CD8-positive, alpha-beta T cell (primary cell): ENCODE measurements at regions of chr13 and their contacts with region 1.

Region 1: DNA sequence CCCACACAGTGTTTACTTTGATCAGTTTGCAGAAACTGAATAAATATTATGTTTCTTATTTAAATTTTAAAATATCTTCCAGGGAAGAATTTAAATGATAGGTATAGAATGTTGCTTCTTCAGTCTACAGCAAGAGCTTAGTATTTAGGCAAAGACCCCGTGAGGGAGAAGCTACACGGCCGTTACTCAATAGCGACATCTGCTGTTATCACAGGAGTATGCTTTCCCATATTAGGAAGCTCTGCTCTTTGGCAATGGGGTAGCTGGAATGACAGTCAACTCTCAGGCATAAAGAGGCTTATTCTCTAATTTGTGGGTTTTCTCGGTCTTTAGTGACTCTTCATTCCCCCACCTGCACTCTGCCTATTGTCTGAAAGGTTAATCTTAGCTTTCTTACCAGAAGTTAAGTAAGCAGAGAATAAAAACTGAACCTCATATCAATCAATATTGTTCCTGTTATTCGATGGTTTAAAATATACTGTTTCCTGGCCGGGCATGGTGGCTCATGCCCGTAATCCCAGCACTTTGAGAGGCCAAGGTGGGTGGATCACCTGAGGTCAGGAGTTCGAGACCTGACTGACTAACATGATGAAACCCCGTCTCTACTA is 13.2 kb upstream of the LHFPL6 start:
- DNase-seq: peak in 7 of 9 experiments; percentile 7 to 73 (median 33)
- ATAC-seq: peak; percentile 86
- H3K4me3 ChIP-seq: no peak overlapping the region
- H3K4me3 Mint-ChIP-seq: no peak overlapping the region
- H3K27ac ChIP-seq: no peak overlapping the region
- H3K27ac Mint-ChIP-seq: no peak overlapping the region
- H3K4me1 ChIP-seq: no peaks in the 10 kb centered on the region
- H3K4me1 Mint-ChIP-seq: no peaks in the 10 kb centered on the region
- H3K27me3 ChIP-seq: no peaks in the 10 kb centered on the region
- H3K27me3 Mint-ChIP-seq: peaks cover 11% of the 10 kb centered on the region
- CTCF ChIP-seq: peak; percentile 83

Region 2: DNA sequence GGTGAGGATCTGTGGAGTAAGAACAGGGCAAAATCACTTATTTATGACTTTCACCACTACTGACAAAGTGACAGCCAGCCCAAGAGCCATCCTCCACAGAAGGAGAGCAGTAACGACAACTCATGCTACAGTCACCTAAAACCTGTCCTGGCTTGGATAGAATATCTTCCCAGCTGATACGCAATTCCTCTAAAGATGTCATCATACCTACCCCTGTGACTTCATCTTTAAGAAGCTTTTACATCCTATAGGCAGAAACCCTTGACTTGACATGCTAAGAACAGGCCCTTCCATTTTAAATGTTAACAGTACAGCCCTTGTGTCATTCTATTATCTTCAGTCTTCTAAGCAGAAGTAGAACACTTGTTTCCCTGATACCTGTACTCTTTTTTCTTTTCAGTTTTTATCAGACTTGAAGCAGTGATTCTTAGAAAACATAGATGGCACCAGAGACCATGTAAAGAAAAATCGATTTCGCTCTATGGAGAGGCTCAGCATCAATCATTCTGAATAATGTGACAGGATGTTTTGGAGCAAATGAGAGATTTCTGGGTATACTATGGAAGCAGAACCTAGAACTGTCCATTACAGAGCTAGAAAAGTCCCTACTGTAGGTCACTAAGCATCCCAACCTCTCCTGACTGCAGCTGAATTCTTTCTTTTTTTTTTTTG is 645.7 kb before region 1 on chr13:
- CTCF ChIA-PET with region 1: interaction called, 15 read pairs
- POLR2A ChIA-PET with region 1: no interaction called
- intact Hi-C with region 1: loop called in 1 of 2 experiments (anchors 5 kb)
- DNase-seq: peak in 2 of 9 experiments; percentile 3 to 13
- ATAC-seq: no peak
- H3K4me3 ChIP-seq: no peak overlapping the region
- H3K4me3 Mint-ChIP-seq: no peak overlapping the region
- H3K27ac ChIP-seq: no peak overlapping the region
- H3K27ac Mint-ChIP-seq: no peak overlapping the region
- H3K4me1 ChIP-seq: no peaks in the 10 kb centered on the region
- H3K4me1 Mint-ChIP-seq: no peaks in the 10 kb centered on the region
- H3K27me3 ChIP-seq: no peaks in the 10 kb centered on the region
- H3K27me3 Mint-ChIP-seq: peaks cover 4% of the 10 kb centered on the region
- CTCF ChIP-seq: no peak

Region 3: DNA sequence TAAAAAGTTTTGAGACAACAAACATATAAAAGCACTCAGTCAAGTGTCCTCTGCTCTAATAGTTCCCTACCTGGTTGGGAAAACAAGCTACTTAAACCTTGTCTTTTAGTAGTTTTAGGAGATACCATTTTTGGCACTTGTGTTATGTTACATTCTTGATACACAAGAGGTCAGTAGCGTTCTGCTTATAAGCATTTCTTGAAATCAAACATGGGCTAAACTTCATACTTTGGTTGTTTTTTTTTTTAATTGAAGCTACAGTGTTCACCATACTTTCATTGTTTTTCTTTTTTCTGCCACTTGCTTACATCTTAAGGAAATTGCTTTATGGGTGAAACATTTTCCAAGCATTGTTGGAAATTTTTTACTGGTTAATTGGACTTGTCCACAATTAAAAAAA is 565.0 kb before region 1 on chr13:
- CTCF ChIA-PET with region 1: interaction called, 5 read pairs
- POLR2A ChIA-PET with region 1: no interaction called
- intact Hi-C with region 1: loop called (anchors 1 to 2 kb)
- DNase-seq: peak in 2 of 9 experiments; percentile 37 to 52
- ATAC-seq: no peak
- H3K4me3 ChIP-seq: no peak overlapping the region
- H3K4me3 Mint-ChIP-seq: no peak overlapping the region
- H3K27ac ChIP-seq: no peak overlapping the region
- H3K27ac Mint-ChIP-seq: no peak overlapping the region
- H3K4me1 ChIP-seq: peaks cover 8% of the 10 kb centered on the region
- H3K4me1 Mint-ChIP-seq: peaks cover 15% of the 10 kb centered on the region
- H3K27me3 ChIP-seq: no peaks in the 10 kb centered on the region
- H3K27me3 Mint-ChIP-seq: no peaks in the 10 kb centered on the region
- CTCF ChIP-seq: no peak

Region 4: DNA sequence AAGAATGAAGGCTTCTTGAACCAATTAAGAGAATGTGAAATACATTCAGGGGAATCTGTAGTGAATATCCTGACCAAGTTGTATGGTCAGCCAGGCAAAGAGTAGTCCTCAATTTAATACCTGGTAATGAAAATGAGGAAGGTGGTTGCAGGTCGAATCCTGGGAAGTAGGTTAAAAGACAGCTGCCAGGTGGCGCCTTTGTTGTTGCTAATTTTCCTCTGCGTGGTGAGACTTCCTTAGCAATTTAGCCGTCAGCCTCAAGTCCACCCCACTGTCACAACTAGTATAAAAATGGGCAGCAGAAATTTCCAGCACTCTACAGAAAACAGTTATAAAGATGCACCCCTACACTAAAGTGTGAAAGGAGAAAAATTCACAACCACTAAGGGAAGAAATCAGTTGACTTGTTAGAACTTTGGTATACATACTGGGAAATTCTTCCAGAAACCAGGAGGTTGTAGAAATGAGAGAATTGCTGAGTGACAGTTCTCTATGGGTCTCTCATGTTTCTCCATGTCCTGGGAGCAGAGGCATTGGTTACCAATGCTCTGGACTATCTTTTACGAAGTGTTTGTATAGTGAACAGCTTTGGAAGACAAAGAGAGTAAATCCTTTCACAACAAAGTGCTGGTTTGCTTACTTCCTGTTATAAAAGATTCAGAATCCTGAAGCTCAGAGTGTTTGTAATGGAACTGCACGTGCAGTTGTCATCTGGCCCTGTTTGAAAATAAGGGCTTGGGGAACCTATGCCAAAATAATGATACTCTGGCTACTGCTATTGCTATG is 342.0 kb before region 1 on chr13:
- CTCF ChIA-PET with region 1: interaction called, 3 read pairs
- POLR2A ChIA-PET with region 1: no interaction called
- intact Hi-C with region 1: loop called in 1 of 2 experiments (anchors 5 kb)
- DNase-seq: no peak
- ATAC-seq: no peak
- H3K4me3 ChIP-seq: no peak overlapping the region
- H3K4me3 Mint-ChIP-seq: no peak overlapping the region
- H3K27ac ChIP-seq: no peak overlapping the region
- H3K27ac Mint-ChIP-seq: no peak overlapping the region
- H3K4me1 ChIP-seq: no peaks in the 10 kb centered on the region
- H3K4me1 Mint-ChIP-seq: no peaks in the 10 kb centered on the region
- H3K27me3 ChIP-seq: no peaks in the 10 kb centered on the region
- H3K27me3 Mint-ChIP-seq: peaks cover 5% of the 10 kb centered on the region
- CTCF ChIP-seq: no peak

Region 5: DNA sequence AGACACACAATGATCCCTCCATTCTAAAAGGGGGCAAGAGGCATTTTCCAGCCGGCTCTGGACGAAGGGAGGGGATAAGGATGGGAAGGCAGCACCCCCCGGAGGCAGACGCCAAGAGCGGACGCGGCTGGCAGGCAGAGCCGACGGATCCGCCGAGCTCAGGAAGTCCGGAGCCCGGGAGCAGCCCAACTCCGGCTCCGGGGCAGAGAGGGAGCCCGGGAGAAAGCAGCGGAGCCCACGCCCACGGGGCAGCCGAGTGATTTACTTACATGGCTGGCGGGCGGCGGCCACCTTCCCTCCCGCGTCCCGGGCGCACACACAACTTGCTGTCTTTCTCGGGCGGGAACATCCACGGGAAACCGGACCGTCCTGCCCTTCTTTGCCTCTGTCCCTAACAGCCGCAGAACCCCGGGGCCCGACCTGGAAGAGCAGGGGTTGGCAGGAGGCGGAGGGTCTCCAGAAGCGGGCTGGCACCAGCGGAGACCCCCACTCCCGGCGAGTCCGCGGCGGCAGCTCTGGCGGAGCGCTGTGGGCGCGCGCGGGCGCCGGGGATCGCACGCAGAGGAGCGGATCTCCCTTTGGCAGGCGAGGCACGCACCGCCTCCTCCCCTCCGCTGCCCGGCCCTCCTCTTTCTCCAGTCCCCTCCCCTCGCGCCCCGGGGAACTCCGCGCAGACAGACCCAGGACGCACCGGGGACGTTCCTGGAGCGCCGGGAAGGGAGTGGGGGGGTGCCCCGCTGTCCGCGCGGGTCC is 13.4 kb before region 1 on chr13 and contains the start of gene LHFPL6:
- CTCF ChIA-PET with region 1: interaction called, 13 read pairs
- POLR2A ChIA-PET with region 1: no interaction called
- intact Hi-C with region 1: no loop called
- DNase-seq: peak in 6 of 9 experiments; percentile 15 to 60 (median 29)
- ATAC-seq: peak; percentile 84
- H3K4me3 ChIP-seq: peak within 1 kb of the TSS; percentile 27 to 46
- H3K4me3 Mint-ChIP-seq: peak within 1 kb of the TSS; percentile 69
- H3K27ac ChIP-seq: no peak within 1 kb of the TSS
- H3K27ac Mint-ChIP-seq: no peak within 1 kb of the TSS
- H3K4me1 ChIP-seq: peaks cover 5% of the 10 kb centered on the region
- H3K4me1 Mint-ChIP-seq: peaks cover 12% of the 10 kb centered on the region
- H3K27me3 ChIP-seq: peaks cover 4 to 20% of the 10 kb centered on the region in 2 experiments
- H3K27me3 Mint-ChIP-seq: peaks cover 48% of the 10 kb centered on the region
- CTCF ChIP-seq: no peak
- total RNA-seq, gene LHFPL6: not detected

Region 6: GRCh38 chr13:39676315-39676876 is 60.2 kb after region 1 on chr13:
- CTCF ChIA-PET with region 1: interaction called, 3 read pairs
- POLR2A ChIA-PET with region 1: no interaction called
- intact Hi-C with region 1: loop called in 1 of 2 experiments (anchors 2 kb)
- DNase-seq: peak in 5 of 9 experiments; percentile 12 to 69 (median 27)
- ATAC-seq: no peak
- H3K4me3 ChIP-seq: no peak overlapping the region
- H3K4me3 Mint-ChIP-seq: no peak overlapping the region
- H3K27ac ChIP-seq: no peak overlapping the region
- H3K27ac Mint-ChIP-seq: no peak overlapping the region
- H3K4me1 ChIP-seq: no peaks in the 10 kb centered on the region
- H3K4me1 Mint-ChIP-seq: no peaks in the 10 kb centered on the region
- H3K27me3 ChIP-seq: no peaks in the 10 kb centered on the region
- H3K27me3 Mint-ChIP-seq: no peaks in the 10 kb centered on the region
- CTCF ChIP-seq: peak; percentile 81